MCF 10A (cell line): ENCODE measurements at regions of chr3 and their contacts with region 1.

Region 1: DNA sequence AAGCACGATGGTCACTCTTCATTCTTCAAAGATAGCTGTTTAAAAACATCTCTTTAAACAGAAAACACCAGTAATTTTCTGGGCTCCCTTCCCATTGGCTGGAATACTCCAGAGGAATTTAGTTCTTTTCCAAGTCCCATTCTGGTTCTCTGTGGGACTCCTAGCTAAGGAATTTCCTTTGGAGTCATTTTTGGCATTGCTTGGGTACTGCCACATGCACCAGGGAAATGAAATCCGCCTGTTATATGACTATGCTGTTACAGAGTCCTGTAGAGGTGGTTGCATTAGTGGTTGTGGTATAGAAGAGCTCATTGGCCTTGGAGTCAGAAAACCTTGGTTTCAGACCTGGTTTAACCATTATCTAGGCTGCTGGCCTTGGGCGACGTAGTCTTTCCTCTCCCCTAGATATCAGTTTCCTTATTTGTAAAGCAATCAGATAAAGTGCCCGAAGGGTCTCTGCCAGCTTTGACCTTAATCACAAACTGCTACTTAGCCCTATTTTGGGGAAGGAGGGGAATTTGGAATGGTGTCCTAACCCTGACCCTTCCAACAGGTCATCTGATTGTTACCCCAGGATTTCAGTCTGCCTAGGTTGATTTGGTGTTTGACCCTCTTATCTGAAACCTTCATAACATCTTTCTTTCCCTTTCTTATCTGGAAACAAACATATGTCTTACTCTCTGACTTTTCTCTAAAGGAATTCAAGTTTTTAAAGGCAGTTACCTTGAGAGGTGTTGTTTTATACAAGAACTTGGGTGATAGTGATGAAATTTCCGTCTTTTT is 13.4 kb downstream of the RTP1 start:
- DNase-seq: no peak
- H3K4me3 Mint-ChIP-seq: no peak overlapping the region
- H3K27ac Mint-ChIP-seq: no peak overlapping the region
- H3K4me1 Mint-ChIP-seq: peaks cover 35% of the 10 kb centered on the region
- H3K27me3 Mint-ChIP-seq: no peaks in the 10 kb centered on the region
- CTCF ChIP-seq: no peak

Region 2: GRCh38 chr3:187197057-187197649 is 13.6 kb before region 1 on chr3 and contains the start of gene RTP1:
- CTCF ChIA-PET with region 1: interaction called, 13 read pairs
- POLR2A ChIA-PET with region 1: interaction called, 3 read pairs
- intact Hi-C with region 1: no loop called
- DNase-seq: no peak
- H3K4me3 Mint-ChIP-seq: no peak within 1 kb of the TSS
- H3K27ac Mint-ChIP-seq: no peak within 1 kb of the TSS
- H3K4me1 Mint-ChIP-seq: peaks cover 10% of the 10 kb centered on the region
- H3K27me3 Mint-ChIP-seq: no peaks in the 10 kb centered on the region
- CTCF ChIP-seq: no peak
- total RNA-seq, gene RTP1: not detected in 2 replicates

Region 3: GRCh38 chr3:187305881-187306280 is 95.1 kb after region 1 on chr3:
- CTCF ChIA-PET with region 1: no interaction called
- POLR2A ChIA-PET with region 1: no interaction called
- intact Hi-C with region 1: no loop called
- DNase-seq: no peak
- H3K4me3 Mint-ChIP-seq: no peak overlapping the region
- H3K27ac Mint-ChIP-seq: no peak overlapping the region
- H3K4me1 Mint-ChIP-seq: no peaks in the 10 kb centered on the region
- H3K27me3 Mint-ChIP-seq: peaks cover 96% of the 10 kb centered on the region
- CTCF ChIP-seq: no peak